Activated naive CD4-positive, alpha-beta T cell treated with anti-CD3 and anti-CD28 coated beads for 36 hours (primary cell): ENCODE measurements at regions of chr6 and their contacts with region 1.

Region 1: GRCh38 chr6:490251-491037 is 98.9 kb downstream of the IRF4 start:
- DNase-seq: peak; percentile 80
- H3K4me3 Mint-ChIP-seq: peak overlapping the region; percentile 41
- H3K27ac Mint-ChIP-seq: peak overlapping the region; percentile 95
- H3K4me1 Mint-ChIP-seq: peaks cover 94% of the 10 kb centered on the region
- H3K27me3 Mint-ChIP-seq: no peaks in the 10 kb centered on the region

Region 2: DNA sequence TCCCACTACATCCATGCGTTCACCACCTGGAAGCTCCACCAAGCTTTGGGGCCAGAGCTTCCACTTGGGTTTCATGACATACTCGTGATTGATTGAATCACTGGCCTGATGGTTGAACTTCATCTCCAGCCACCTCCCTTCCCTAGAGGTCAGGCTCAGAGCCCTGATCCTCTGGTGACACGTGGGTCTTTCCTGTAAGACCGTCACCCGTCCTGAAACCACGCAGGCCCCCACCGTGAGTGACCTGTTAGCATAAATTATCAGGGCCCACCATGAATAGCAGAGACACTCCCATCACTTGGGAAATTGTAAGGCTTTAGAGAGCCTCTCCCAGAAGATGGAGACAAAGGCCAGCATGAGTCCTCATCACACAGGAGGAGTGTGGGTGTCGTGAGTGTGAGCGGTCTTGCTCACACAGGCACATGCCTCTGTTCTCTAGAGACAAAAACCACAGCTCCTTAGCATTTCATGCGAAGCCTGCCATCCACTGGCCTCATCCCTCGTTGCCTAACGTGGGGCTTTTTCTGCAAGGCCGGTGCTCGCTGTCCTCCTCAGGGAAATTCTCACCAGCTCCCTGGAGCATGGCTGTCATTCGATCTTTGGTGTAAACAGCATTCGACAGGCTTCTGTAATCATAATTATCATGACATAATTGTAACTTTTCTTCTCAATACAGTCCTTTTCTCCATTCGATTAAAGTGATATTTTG is 263.2 kb before region 1 on chr6:
- CTCF ChIA-PET with region 1: no interaction called
- intact Hi-C with region 1: loop called (anchors 1 kb)
- DNase-seq: peak; percentile 60
- H3K4me3 Mint-ChIP-seq: no peak overlapping the region
- H3K27ac Mint-ChIP-seq: peak overlapping the region; percentile 95
- H3K4me1 Mint-ChIP-seq: peaks cover 65% of the 10 kb centered on the region
- H3K27me3 Mint-ChIP-seq: no peaks in the 10 kb centered on the region

Region 3: DNA sequence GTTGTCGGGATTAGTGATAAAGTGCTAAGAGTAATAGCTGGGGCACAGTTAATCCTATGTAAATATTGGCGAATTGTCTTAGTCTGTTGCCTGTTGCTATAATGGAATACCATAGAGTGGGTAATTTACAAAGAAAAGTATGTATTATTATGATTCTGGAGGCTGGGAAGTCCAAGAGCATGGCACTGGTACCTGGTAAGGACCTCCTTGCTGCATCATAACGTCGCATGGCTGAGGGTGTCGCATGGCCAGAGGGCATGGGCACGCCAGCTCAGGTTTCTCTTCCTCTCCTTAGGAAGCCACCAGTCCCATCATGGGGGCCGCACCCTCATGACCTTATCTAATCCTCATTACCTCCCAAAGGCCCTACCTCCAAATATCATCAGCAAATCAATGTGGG is 69.2 kb before region 1 on chr6:
- CTCF ChIA-PET with region 1: no interaction called
- intact Hi-C with region 1: no loop called
- DNase-seq: no peak
- H3K4me3 Mint-ChIP-seq: no peak overlapping the region
- H3K27ac Mint-ChIP-seq: no peak overlapping the region
- H3K4me1 Mint-ChIP-seq: peaks cover 29% of the 10 kb centered on the region
- H3K27me3 Mint-ChIP-seq: no peaks in the 10 kb centered on the region

Region 4: GRCh38 chr6:431986-432385 is 58.5 kb before region 1 on chr6:
- CTCF ChIA-PET with region 1: interaction called, 4 read pairs
- intact Hi-C with region 1: loop called (anchors 1 kb)
- DNase-seq: peak; percentile 88
- H3K4me3 Mint-ChIP-seq: no peak overlapping the region
- H3K27ac Mint-ChIP-seq: no peak overlapping the region
- H3K4me1 Mint-ChIP-seq: peaks cover 60% of the 10 kb centered on the region
- H3K27me3 Mint-ChIP-seq: no peaks in the 10 kb centered on the region

Region 5: DNA sequence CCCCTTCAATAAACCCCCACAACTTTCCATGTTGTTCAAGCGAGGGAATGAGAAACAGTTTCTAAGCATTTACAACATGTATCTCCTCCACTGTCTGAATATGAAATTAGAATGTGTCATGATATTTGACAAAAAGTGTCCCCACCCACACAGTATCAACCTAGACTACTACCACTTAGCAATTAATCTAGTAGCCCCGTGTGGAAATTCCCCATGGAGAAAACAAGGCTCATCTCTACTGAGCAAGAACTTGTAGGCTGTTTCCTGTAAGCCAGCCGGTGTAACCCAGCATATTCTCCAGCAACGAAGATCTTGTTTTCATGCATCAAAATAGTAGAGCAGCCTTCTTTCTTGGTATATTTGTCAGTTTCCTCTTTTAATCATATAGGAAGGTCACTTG is 16.1 kb after region 1 on chr6:
- CTCF ChIA-PET with region 1: interaction called, 6 read pairs
- intact Hi-C with region 1: loop called (anchors 1 kb)
- DNase-seq: peak; percentile 89
- H3K4me3 Mint-ChIP-seq: peak overlapping the region; percentile 45
- H3K27ac Mint-ChIP-seq: peak overlapping the region; percentile 99
- H3K4me1 Mint-ChIP-seq: peaks cover 95% of the 10 kb centered on the region
- H3K27me3 Mint-ChIP-seq: no peaks in the 10 kb centered on the region

Region 6: GRCh38 chr6:551405-551804 is 61.0 kb after region 1 on chr6:
- CTCF ChIA-PET with region 1: interaction called, 4 read pairs
- intact Hi-C with region 1: loop called (anchors 1 kb)
- DNase-seq: peak; percentile 56
- H3K4me3 Mint-ChIP-seq: no peak overlapping the region
- H3K27ac Mint-ChIP-seq: peak overlapping the region; percentile 79
- H3K4me1 Mint-ChIP-seq: peaks cover 57% of the 10 kb centered on the region
- H3K27me3 Mint-ChIP-seq: no peaks in the 10 kb centered on the region